Endothelial cell of umbilical vein (primary cell): ENCODE measurements at regions of chr17 and their contacts with region 1.

Region 1: GRCh38 chr17:76353599-76354316 is at the start of gene PRPSAP1:
- DNase-seq: peak; percentile 94
- H3K4me3 ChIP-seq: peak within 1 kb of the TSS; percentile 50 to 94 (median 56)
- H3K27ac ChIP-seq: peak within 1 kb of the TSS; percentile 98
- H3K4me1 ChIP-seq: peaks cover 10% of the 10 kb centered on the region
- H3K27me3 ChIP-seq: no peaks in the 10 kb centered on the region
- CTCF ChIP-seq: peak in 1 of 2 donors; percentile 52
- POLR2A ChIP-seq: peak; percentile 96
- total RNA-seq, gene PRPSAP1: 79.1 and 90.2 TPM in 2 replicates

Region 2: GRCh38 chr17:76307299-76307965 is 46.3 kb before region 1 on chr17:
- CTCF ChIA-PET with region 1: interaction called, 14 read pairs
- POLR2A ChIA-PET with region 1: no interaction called
- dilution Hi-C with region 1: no loop called
- intact Hi-C with region 1: no loop called
- DNase-seq: no peak
- H3K4me3 ChIP-seq: no peak overlapping the region
- H3K27ac ChIP-seq: no peak overlapping the region
- H3K4me1 ChIP-seq: no peaks in the 10 kb centered on the region
- H3K27me3 ChIP-seq: no peaks in the 10 kb centered on the region
- CTCF ChIP-seq: no peak
- POLR2A ChIP-seq: no peak

Region 3: DNA sequence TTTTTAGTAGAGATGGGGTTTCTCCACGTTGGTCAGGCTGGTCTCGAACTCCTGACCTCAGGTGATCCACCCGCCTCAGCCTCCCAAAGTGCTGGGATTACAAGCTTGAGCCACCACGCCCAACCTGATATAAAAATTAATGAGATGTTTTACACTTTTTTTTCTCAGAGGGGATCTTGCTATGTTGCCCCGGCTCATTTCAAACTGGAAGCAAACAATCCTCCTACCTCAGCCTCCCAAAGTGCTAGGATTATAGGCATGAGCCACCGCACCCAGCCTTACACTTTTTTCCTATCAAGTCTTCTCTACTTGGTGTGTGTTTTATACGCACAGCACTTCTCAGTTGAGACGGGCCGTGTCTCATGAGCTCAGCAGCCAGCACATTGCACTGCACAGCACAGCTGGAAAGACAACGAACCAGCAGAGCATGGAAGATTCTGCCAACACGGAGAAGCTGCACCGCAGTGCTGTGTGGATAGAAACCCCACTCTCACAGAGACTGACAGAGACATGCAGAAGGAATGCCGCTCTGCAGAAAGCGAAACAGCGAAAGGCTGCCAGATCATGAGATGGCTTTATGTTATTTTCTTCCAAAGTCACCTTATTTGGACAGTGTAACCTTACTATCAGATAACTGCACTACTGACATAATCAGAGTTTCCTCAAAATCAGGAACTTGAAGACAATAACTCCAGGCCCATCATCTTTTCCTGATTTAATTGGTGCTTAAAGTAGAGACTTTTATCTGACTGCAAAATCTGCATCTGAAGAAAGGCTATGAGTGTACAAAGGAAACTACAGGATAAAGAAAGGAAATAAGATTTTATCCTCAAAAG is 39.1 kb before region 1 on chr17:
- CTCF ChIA-PET with region 1: interaction called, 4 read pairs
- POLR2A ChIA-PET with region 1: interaction called, 5 read pairs
- dilution Hi-C with region 1: no loop called
- intact Hi-C with region 1: loop called (anchors 1 kb)
- DNase-seq: peak; percentile 88
- H3K4me3 ChIP-seq: peak overlapping the region in 1 of 3 experiments; percentile 23
- H3K27ac ChIP-seq: peak overlapping the region; percentile 71
- H3K4me1 ChIP-seq: peaks cover 30% of the 10 kb centered on the region
- H3K27me3 ChIP-seq: no peaks in the 10 kb centered on the region
- CTCF ChIP-seq: no peak
- POLR2A ChIP-seq: no peak

Region 4: GRCh38 chr17:76365256-76365903 is 11.6 kb after region 1 on chr17:
- CTCF ChIA-PET with region 1: interaction called, 30 read pairs
- POLR2A ChIA-PET with region 1: interaction called, 5 read pairs
- dilution Hi-C with region 1: no loop called
- intact Hi-C with region 1: loop called (anchors 1 kb)
- DNase-seq: no peak
- H3K4me3 ChIP-seq: no peak overlapping the region
- H3K27ac ChIP-seq: no peak overlapping the region
- H3K4me1 ChIP-seq: peaks cover 6% of the 10 kb centered on the region
- H3K27me3 ChIP-seq: no peaks in the 10 kb centered on the region
- CTCF ChIP-seq: peak; percentile 30 to 33
- POLR2A ChIP-seq: no peak

Region 5: DNA sequence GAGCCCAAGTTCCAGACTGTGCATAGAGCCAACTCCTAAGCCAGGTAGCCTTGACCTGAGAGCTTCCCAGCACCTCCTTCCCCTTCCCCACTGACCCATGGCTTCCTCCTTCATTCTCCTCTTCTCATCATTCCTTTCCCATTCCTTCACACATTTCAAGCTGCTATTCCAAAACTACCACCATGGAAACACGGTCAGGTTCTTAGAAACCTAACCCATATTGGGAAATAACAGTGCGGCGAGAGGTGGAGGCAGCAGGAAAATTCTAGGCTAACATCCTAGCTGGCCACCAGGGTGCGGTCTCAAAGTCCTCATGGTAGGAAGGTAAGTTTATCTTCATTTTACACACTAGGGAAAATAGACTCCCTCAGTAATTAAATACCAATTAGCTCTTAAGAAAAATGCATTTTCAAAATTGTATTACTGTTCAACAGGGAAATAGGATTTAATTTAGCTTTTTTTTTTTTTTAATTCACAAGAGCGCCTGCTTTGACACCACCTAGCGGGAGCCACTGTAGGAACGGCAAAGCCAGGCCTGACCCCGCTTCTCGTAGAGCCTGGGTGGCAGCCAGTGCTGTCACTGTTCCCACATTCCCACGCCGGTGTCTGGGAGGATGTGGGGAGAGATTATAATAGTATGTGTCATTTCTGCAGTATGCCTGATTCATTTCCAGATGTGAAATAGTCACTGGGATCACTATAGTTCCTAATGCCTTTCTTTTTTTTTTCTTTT is 16.7 kb after region 1 on chr17:
- CTCF ChIA-PET with region 1: interaction called, 30 read pairs
- POLR2A ChIA-PET with region 1: interaction called, 4 read pairs
- dilution Hi-C with region 1: no loop called
- intact Hi-C with region 1: loop called (anchors 1 kb)
- DNase-seq: peak; percentile 92
- H3K4me3 ChIP-seq: no peak overlapping the region
- H3K27ac ChIP-seq: peak overlapping the region; percentile 97
- H3K4me1 ChIP-seq: peaks cover 28% of the 10 kb centered on the region
- H3K27me3 ChIP-seq: no peaks in the 10 kb centered on the region
- CTCF ChIP-seq: peak; percentile 56 to 62
- POLR2A ChIP-seq: no peak

Region 6: DNA sequence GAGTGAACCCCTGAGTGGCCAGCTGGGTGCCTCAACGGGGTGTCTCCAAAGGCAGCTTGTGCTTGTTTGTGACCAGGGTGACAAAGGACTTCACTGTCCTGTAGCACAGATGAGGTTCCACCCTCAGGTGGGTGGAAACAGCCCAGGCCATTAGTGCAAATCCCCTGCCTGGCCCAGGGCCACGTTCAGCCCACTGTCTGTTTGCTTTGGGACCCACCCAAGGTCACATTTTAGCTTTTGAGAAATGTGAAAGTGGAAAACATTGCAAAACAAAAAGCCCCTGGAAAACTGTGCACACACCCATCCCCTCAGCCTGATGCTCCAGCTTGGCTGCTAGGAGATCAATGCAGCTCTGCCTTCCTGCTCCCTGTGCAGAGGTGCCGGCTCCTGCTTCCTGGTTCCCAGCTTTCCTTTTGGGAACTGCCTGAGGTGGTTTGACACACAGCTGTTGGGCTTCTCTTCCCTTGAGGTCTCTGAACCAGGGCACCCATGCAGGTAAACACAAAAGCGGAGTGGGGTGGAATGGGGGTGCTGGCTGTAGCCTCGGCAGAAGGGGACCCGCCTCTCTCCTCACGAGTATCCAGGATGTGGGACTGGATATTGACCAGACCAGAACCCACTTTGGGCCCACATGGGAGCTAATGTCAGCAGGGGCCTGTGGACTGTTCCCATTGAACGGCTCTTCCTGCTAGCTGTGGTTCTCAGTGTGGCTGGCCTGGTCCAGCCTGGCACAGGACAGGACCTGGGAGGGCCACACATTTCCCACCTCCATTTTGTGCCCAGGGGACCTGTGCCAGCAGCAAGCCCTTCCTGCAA is 22.8 kb after region 1 on chr17:
- CTCF ChIA-PET with region 1: interaction called, 11 read pairs
- POLR2A ChIA-PET with region 1: no interaction called
- dilution Hi-C with region 1: no loop called
- intact Hi-C with region 1: no loop called
- DNase-seq: no peak
- H3K4me3 ChIP-seq: no peak overlapping the region
- H3K27ac ChIP-seq: no peak overlapping the region
- H3K4me1 ChIP-seq: peaks cover 22% of the 10 kb centered on the region
- H3K27me3 ChIP-seq: no peaks in the 10 kb centered on the region
- CTCF ChIP-seq: no peak
- POLR2A ChIP-seq: no peak